ENCODE measurements at regions of chr1 and their contacts with region 1.

Region 1: GRCh38 chr1:170664828-170665612 is 1.1 kb downstream of the PRRX1 start:
- DNase-seq: no peak
- ATAC-seq: peak; percentile 20
- H3K4me3 Mint-ChIP-seq: no peak overlapping the region
- H3K27ac Mint-ChIP-seq: no peak overlapping the region
- H3K4me1 Mint-ChIP-seq: peaks cover 29% of the 10 kb centered on the region
- H3K27me3 Mint-ChIP-seq: peaks cover 83% of the 10 kb centered on the region
- CTCF ChIP-seq: no peak

Region 2: GRCh38 chr1:169928438-169929209 is 736.4 kb before region 1 on chr1:
- CTCF ChIA-PET with region 1: no interaction called
- POLR2A ChIA-PET with region 1: no interaction called
- intact Hi-C with region 1: loop called (anchors 10 kb)
- DNase-seq: no peak
- ATAC-seq: peak; percentile 66
- H3K4me3 Mint-ChIP-seq: no peak overlapping the region
- H3K27ac Mint-ChIP-seq: no peak overlapping the region
- H3K4me1 Mint-ChIP-seq: peaks cover 9% of the 10 kb centered on the region
- H3K27me3 Mint-ChIP-seq: no peaks in the 10 kb centered on the region
- CTCF ChIP-seq: peak; percentile 95

Region 3: DNA sequence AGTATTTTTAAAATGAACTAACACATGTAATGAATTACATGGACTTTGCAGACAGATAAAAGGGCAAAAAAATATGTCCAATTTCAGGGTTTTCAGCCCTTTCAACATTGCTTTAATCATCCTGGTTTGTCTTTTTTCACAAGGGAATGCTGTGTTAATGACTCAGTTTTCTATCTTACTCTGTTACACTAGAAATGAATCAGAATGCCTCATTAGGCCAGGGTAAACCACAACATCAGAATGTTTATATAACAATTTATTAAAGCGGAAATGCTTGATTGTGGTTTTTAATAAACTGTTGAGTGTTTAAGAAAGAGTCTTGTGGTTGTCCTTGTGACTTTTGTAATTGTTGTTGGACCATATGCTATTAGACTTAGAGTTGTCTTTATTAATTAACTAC is 119.5 kb before region 1 on chr1:
- CTCF ChIA-PET with region 1: no interaction called
- POLR2A ChIA-PET with region 1: no interaction called
- intact Hi-C with region 1: no loop called
- DNase-seq: no peak
- ATAC-seq: no peak
- H3K4me3 Mint-ChIP-seq: no peak overlapping the region
- H3K27ac Mint-ChIP-seq: no peak overlapping the region
- H3K4me1 Mint-ChIP-seq: peaks cover 5% of the 10 kb centered on the region
- H3K27me3 Mint-ChIP-seq: no peaks in the 10 kb centered on the region
- CTCF ChIP-seq: no peak

Region 4: DNA sequence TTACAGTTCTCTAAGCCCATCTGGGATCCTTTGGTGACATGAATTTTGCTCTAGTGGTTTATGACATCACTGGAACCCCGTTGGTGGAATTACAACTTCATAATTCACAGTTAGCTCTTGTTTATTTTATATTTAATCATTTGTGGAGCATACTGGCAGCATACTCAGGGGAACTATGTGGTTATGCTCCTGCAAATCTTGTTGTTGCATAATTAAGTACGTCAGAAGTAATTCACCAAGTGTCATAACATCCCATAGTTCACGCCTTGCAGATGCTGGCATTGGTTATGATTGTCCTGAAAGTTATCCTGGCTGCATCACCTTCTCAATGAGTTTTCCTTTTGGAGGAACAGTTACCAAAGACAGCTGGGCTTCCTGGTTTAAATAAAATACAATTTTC is 15.4 kb after region 1 on chr1:
- CTCF ChIA-PET with region 1: no interaction called
- POLR2A ChIA-PET with region 1: no interaction called
- intact Hi-C with region 1: no loop called
- DNase-seq: no peak
- ATAC-seq: no peak
- H3K4me3 Mint-ChIP-seq: no peak overlapping the region
- H3K27ac Mint-ChIP-seq: no peak overlapping the region
- H3K4me1 Mint-ChIP-seq: no peaks in the 10 kb centered on the region
- H3K27me3 Mint-ChIP-seq: peaks cover 29% of the 10 kb centered on the region
- CTCF ChIP-seq: no peak

Region 5: GRCh38 chr1:170765712-170766330 is 100.8 kb after region 1 on chr1:
- CTCF ChIA-PET with region 1: no interaction called
- POLR2A ChIA-PET with region 1: no interaction called
- intact Hi-C with region 1: no loop called
- DNase-seq: no peak
- ATAC-seq: no peak
- H3K4me3 Mint-ChIP-seq: no peak overlapping the region
- H3K27ac Mint-ChIP-seq: no peak overlapping the region
- H3K4me1 Mint-ChIP-seq: no peaks in the 10 kb centered on the region
- H3K27me3 Mint-ChIP-seq: peaks cover 2% of the 10 kb centered on the region
- CTCF ChIP-seq: no peak

Measured in activated CD8-positive, alpha-beta T cell treated with anti-CD3 and anti-CD28 coated beads for 36 hours (primary cell).